ENCODE measurements at regions of chr3 and their contacts with region 1.

Region 1: GRCh38 chr3:134672571-134672970 is 21.7 kb upstream of the KY start:
- DNase-seq: no peak
- ATAC-seq: no peak
- H3K4me3 ChIP-seq: no peak overlapping the region
- H3K27ac ChIP-seq: no peak overlapping the region
- H3K4me1 ChIP-seq: no peaks in the 10 kb centered on the region
- H3K27me3 ChIP-seq: peaks cover 9% of the 10 kb centered on the region
- CTCF ChIP-seq: no peak
- POLR2A ChIP-seq: no peak
- RAD21 ChIP-seq: no peak

Region 2: DNA sequence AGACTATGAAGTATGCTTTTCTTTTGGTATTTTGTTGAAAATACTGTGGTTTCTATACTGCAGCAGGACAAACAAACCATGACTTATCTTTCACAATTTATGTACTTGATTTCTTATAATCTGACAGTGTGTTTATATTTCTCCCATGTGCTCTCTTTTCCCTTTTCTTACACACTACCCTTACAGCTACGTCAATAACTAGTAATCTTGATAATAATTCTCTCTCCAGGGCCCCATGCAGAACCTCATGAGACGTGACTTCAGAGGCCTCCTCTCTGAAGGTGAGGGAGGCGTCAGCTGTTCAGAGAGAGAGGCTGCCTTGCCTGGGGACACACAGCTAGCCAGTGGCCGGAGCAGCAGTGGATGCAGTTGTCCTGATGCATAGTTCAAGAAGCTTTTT is 57.6 kb before region 1 on chr3:
- CTCF ChIA-PET with region 1: no interaction called
- POLR2A ChIA-PET with region 1: interaction called, 25 read pairs
- dilution Hi-C with region 1: no loop called
- in situ Hi-C with region 1: no loop called
- intact Hi-C with region 1: no loop called
- DNase-seq: peak; percentile 41
- ATAC-seq: peak; percentile 75
- H3K4me3 ChIP-seq: no peak overlapping the region
- H3K27ac ChIP-seq: no peak overlapping the region
- H3K4me1 ChIP-seq: peaks cover 2% of the 10 kb centered on the region; the same call in 1 of the 2 replicates
- H3K27me3 ChIP-seq: peaks cover 32% of the 10 kb centered on the region
- CTCF ChIP-seq: no peak
- POLR2A ChIP-seq: no peak
- RAD21 ChIP-seq: no peak

Measured in IMR-90 (cell line).